ENCODE measurements at regions of chr15 and their contacts with region 1.

Region 1: DNA sequence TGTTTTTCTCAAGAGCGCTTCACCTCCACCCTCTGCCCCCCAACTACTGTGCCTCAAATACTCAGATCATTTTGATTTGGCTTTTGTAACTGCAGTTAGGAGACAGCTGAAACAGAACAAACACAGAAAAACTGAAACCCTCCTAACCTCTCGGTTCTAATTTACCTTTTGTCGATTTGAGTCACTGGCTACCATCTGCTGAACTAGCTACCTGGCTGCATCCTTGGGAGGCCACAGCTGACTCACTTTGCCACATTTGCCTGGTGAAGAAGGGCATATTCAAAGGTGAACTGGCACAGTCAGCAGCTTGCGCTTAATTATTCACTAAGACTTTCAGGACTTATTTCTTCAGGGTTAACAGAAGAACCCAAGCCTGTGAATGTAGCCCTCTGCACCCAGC is 117.7 kb downstream of the FOXB1 start:
- DNase-seq: no peak
- H3K4me3 ChIP-seq: no peak overlapping the region
- H3K27ac ChIP-seq: no peak overlapping the region
- H3K4me1 ChIP-seq: peaks cover 6 to 34% (median 23%) of the 10 kb centered on the region in 4 experiments
- H3K27me3 ChIP-seq: peaks cover 0 to 2% (median 0%) of the 10 kb centered on the region in 4 experiments; a peak in 3 of 7 replicates
- CTCF ChIP-seq: no peak
- EP300 ChIP-seq: no peak
- POLR2A ChIP-seq: no peak
- RAD21 ChIP-seq: no peak

Region 2: DNA sequence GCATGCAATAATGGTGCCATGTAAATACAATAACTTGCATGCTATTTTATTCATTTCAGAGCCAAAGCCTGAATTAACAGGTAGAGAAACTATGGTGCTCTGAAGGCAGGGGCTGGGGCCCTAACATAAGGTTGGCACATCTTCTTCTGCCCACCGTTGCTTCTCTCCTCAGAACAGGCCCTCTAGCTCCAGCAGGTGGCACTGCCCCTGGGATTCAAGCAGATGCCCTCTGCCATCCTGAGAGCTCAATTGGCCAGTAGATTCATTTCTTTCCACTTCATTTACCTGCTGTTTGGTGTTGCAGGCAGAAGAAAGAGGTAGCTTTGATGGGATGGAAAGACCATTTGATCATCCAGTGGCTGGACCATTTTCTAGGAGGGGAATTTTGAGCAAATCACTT is 12.8 kb after region 1 on chr15:
- CTCF ChIA-PET with region 1: interaction called, 17 read pairs
- POLR2A ChIA-PET with region 1: no interaction called
- DNase-seq: no peak
- H3K4me3 ChIP-seq: no peak overlapping the region
- H3K27ac ChIP-seq: no peak overlapping the region
- H3K4me1 ChIP-seq: peaks cover 0 to 9% (median 0%) of the 10 kb centered on the region in 4 experiments; a peak in 1 of 7 replicates
- H3K27me3 ChIP-seq: no peaks in the 10 kb centered on the region
- CTCF ChIP-seq: peak in 2 of 3 experiments; percentile 44 to 46; a peak in 3 of 4 replicates
- EP300 ChIP-seq: no peak
- POLR2A ChIP-seq: no peak
- RAD21 ChIP-seq: peak in 1 of 2 experiments; percentile 41; a peak in 2 of 4 replicates